ENCODE measurements at regions of chr12 and their contacts with region 1.

Region 1: GRCh38 chr12:14845350-14845750 is 2.0 kb upstream of the ART4 start:
- DNase-seq: peak; percentile 49
- H3K4me3 ChIP-seq: no peak overlapping the region
- H3K27ac ChIP-seq: peak overlapping the region in 3 of 4 donors; percentile 5 to 22 (median 20)
- H3K4me1 ChIP-seq: peaks cover 10 to 53% (median 28%) of the 10 kb centered on the region in 4 donors
- H3K27me3 ChIP-seq: no peaks in the 10 kb centered on the region
- CTCF ChIP-seq: peak; percentile 69 to 89 (median 73)
- EP300 ChIP-seq: no peak
- POLR2A ChIP-seq: no peak

Region 2: DNA sequence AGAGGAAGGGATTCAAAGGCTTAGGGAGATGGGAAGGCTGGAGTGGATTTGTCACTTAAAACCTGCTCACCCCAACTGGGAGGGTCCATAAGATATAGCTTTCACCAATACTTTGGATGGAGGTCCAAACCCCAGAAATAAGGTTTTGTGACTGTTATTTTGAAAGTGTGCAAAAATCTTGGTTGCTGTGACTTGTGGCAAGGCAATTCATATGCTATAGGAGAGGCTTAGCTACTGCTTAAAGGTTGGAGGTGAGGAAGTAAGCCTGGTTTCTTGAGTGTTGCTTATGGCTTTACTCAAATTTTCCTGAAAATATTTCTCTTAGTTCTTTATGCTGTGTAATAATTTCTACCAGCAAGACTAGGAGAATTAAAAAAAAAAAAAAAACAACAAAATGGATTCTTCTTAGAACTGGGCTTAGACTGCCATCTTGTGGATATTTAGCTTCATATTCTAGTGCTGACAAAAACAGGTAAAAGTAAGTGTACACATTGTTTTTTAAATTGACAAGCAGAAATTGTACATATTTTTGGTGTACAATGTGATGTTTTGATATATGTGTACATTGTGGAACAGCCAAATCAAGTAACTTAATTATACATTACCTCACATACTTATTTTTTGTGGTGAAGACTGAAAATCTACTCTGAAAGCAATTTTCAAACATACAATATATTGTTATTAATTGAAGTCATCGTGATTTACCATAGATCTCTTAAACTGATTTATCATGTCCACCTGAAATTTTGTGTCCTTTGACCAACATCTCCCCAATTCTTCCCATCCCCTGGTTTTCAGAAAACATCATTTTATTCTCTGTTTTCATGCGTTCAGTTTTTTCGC is 150.5 kb after region 1 on chr12:
- in situ Hi-C with region 1: loop called (anchors 5 kb)
- intact Hi-C with region 1: loop called (anchors 5 kb)
- DNase-seq: no peak
- H3K4me3 ChIP-seq: no peak overlapping the region
- H3K27ac ChIP-seq: no peak overlapping the region
- H3K4me1 ChIP-seq: peaks cover 0 to 20% (median 2%) of the 10 kb centered on the region in 4 donors
- H3K27me3 ChIP-seq: no peaks in the 10 kb centered on the region
- CTCF ChIP-seq: peak; percentile 63 to 83 (median 68)
- EP300 ChIP-seq: no peak
- POLR2A ChIP-seq: no peak

Region 3: DNA sequence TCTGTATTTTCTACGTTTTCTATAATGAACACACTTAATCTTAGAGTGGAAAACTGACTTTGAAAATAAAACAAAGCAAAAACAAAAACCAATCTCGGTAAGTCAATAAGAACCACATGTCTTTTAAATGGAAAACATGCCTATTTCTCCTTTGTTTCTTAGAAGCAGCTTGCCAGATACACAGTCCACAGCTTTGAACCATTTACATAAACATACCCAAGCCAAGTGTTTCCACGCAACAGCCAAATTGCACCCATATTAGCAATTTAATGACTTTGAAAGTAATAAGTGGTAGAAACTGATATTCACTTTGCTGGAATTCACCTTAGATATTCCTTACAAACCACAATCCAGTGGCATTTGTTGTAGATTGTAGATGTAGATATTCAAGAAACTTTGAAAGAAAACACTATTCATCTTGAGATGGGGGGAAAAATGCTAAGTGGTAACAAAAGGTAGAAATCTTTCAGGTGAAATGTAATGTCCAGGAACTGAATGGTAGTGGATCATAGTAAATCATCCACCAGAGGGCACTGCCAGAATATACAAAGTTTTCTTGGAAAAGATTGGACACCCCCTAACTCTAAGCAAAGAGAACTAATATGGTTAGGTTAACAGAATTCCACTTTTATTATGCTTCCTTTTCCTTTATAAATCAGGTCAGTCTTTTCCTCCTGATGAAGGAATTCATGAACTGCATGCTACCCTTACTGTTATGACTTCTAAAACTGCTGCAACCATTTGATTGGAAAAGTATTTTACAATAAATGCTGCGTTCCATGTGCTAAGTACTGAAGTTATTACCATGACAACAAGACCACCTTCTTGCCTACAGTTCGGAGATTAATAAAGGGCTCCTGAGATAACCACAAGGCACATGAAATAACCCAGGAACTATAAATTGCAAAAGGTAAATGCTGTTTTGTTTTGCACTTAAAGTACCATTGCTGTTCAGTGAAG is 306.1 kb after region 1 on chr12:
- in situ Hi-C with region 1: no loop called
- intact Hi-C with region 1: loop called (anchors 10 kb)
- DNase-seq: no peak
- H3K4me3 ChIP-seq: no peak overlapping the region
- H3K27ac ChIP-seq: peak overlapping the region; percentile 54 to 64 (median 60)
- H3K4me1 ChIP-seq: peaks cover 7 to 44% (median 18%) of the 10 kb centered on the region in 4 donors
- H3K27me3 ChIP-seq: no peaks in the 10 kb centered on the region
- CTCF ChIP-seq: peak; percentile 41 to 51 (median 43)
- EP300 ChIP-seq: no peak
- POLR2A ChIP-seq: no peak

Region 4: GRCh38 chr12:15220994-15221885 is 375.9 kb after region 1 on chr12 and contains the start of gene RERG:
- in situ Hi-C with region 1: loop called in 2 of 4 experiments (anchors 10 kb)
- intact Hi-C with region 1: loop called (anchors 5 kb)
- DNase-seq: peak; percentile 79
- H3K4me3 ChIP-seq: peak within 1 kb of the TSS; percentile 6 to 59 (median 38)
- H3K27ac ChIP-seq: peak within 1 kb of the TSS; percentile 76 to 84 (median 79)
- H3K4me1 ChIP-seq: peaks cover 0 to 16% (median 8%) of the 10 kb centered on the region in 4 donors
- H3K27me3 ChIP-seq: peaks cover 10% of the 10 kb centered on the region
- CTCF ChIP-seq: peak; percentile 88 to 97 (median 97)
- EP300 ChIP-seq: no peak
- POLR2A ChIP-seq: no peak
- total RNA-seq, gene RERG: 3.6 to 12.6 (median 8.6) TPM

Region 5: DNA sequence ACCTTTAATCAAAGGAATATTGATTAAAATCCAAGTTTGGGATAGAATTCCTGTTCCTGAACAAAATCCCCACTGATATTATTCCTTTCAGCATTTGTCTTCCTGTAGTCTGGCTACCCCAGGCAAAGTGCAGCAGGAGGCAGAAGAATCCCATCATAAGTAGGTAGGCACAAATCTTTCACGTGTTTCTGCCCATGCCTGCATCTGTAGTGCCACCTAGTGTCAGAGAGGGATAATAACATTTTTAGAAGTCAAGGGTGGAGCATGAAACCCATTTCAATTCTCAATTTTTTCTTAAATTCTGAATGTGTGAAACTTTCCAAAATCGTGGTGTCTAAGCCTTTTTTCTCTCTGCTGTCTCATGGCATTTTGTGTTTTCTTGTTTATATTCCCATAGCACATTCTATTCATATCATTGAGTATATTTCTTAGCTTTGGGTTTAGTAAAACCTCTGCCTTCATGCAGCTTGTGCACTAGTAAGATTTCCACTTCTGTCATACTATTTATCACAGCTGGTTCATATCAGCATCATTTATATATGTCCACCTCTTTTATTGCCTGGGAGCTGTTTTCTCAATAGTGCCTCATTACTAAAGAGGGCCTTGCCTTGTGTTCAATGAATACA is 423.7 kb after region 1 on chr12:
- in situ Hi-C with region 1: loop called in 1 of 4 experiments (anchors 25 kb)
- intact Hi-C with region 1: no loop called
- DNase-seq: peak; percentile 17
- H3K4me3 ChIP-seq: no peak overlapping the region
- H3K27ac ChIP-seq: no peak overlapping the region
- H3K4me1 ChIP-seq: peaks cover 3 to 4% (median 3%) of the 10 kb centered on the region in 4 donors
- H3K27me3 ChIP-seq: no peaks in the 10 kb centered on the region
- CTCF ChIP-seq: peak; percentile 76 to 85 (median 83)
- EP300 ChIP-seq: no peak
- POLR2A ChIP-seq: no peak

Region 6: DNA sequence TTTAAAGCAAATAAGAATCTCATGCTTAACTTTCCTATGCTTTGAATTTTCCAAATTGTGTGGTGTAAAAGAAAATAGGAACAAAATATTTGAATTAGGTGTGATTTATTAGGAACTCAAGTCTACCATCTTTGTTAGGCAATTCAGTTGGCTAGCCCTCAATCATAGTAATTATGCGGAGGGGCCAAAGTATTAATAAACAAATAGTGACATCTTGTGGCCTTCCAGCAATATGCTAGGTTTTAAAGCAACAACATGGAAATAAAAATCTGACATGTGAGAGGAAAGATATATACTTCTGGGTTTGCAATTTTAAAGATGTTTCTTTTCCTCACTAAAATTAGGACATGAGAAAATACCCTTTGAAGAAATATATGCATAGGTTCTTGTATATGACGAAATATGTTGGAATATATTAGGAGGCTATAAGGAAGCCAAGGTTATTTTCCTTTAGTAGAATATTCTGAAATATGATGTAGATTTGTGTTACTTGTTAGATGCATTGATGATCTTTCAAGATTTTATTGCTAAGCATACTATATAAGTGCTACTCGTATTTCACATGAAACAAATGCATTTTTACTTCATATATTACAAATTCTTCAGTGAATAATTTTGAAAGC is 677.3 kb after region 1 on chr12:
- in situ Hi-C with region 1: loop called in 1 of 4 experiments (anchors 25 kb)
- intact Hi-C with region 1: no loop called
- DNase-seq: no peak
- H3K4me3 ChIP-seq: no peak overlapping the region
- H3K27ac ChIP-seq: no peak overlapping the region
- H3K4me1 ChIP-seq: no peaks in the 10 kb centered on the region
- H3K27me3 ChIP-seq: peaks cover 4% of the 10 kb centered on the region
- CTCF ChIP-seq: peak; percentile 37 to 47 (median 40)
- EP300 ChIP-seq: no peak
- POLR2A ChIP-seq: no peak